ENCODE measurements at regions of chr12 and their contacts with region 1.

Region 1: DNA sequence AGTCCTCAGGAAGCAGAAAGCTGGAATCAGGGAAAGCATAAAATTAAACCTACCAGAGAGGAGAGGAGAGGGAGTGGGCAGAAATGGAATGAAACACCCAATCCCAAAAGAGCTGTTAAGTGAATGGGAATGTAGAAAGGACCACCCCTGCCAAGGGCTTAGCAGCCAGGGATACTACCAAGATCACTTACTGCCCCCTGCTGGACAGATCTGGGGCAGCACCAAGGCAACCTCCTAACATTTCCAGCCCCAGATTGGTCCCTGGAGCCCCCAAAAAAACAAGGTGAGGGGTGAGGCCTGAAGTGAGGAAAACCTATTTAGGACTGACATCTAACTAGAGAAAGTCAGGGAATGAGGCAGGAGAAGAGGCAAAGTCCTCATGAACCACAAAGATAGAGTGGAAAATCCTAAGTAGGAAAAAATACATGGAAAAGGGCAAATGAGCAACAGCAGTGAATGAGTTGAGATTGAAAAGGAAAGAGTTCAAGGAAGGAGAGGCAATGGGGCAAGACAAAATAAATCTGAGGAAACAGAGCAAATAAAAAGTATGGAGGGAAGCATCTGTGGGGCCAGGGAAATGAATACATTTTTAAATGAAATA is 11.2 kb upstream of the FKBP11 start:
- DNase-seq: peak; percentile 43
- ATAC-seq: peak; percentile 86
- H3K4me3 ChIP-seq: no peak overlapping the region
- H3K27ac ChIP-seq: no peak overlapping the region
- H3K4me1 ChIP-seq: peaks cover 7% of the 10 kb centered on the region
- H3K27me3 ChIP-seq: no peaks in the 10 kb centered on the region
- CTCF ChIP-seq: peak; percentile 89
- EP300 ChIP-seq: no peak
- POLR2A ChIP-seq: no peak
- RAD21 ChIP-seq: peak; percentile 67; the same call in 1 of the 2 replicates

Region 2: GRCh38 chr12:48890657-48891418 is 45.6 kb before region 1 on chr12:
- CTCF ChIA-PET with region 1: interaction called, 7 read pairs
- POLR2A ChIA-PET with region 1: no interaction called
- in situ Hi-C with region 1: no loop called
- intact Hi-C with region 1: loop called (anchors 2 kb)
- DNase-seq: peak; percentile 48
- ATAC-seq: peak; percentile 97
- H3K4me3 ChIP-seq: peak overlapping the region in 1 of 3 experiments; percentile 34; a peak in 1 of 6 replicates
- H3K27ac ChIP-seq: no peak overlapping the region
- H3K4me1 ChIP-seq: peaks cover 33% of the 10 kb centered on the region
- H3K27me3 ChIP-seq: peaks cover 1 to 10% of the 10 kb centered on the region in 2 experiments; a peak in 3 of 5 replicates
- CTCF ChIP-seq: peak; percentile 97
- EP300 ChIP-seq: no peak
- POLR2A ChIP-seq: no peak
- RAD21 ChIP-seq: peak; percentile 96

Region 3: GRCh38 chr12:48903982-48904411 is 32.5 kb before region 1 on chr12:
- CTCF ChIA-PET with region 1: no interaction called
- POLR2A ChIA-PET with region 1: no interaction called
- in situ Hi-C with region 1: no loop called
- intact Hi-C with region 1: no loop called
- DNase-seq: peak; percentile 76
- ATAC-seq: peak; percentile 66
- H3K4me3 ChIP-seq: peak overlapping the region; percentile 20 to 41 (median 34); a peak in 2 of 6 replicates
- H3K27ac ChIP-seq: no peak overlapping the region
- H3K4me1 ChIP-seq: peaks cover 87% of the 10 kb centered on the region
- H3K27me3 ChIP-seq: no peaks in the 10 kb centered on the region
- CTCF ChIP-seq: peak; percentile 69
- EP300 ChIP-seq: no peak
- POLR2A ChIP-seq: no peak
- RAD21 ChIP-seq: peak; percentile 20; the same call in 1 of the 2 replicates

Region 4: DNA sequence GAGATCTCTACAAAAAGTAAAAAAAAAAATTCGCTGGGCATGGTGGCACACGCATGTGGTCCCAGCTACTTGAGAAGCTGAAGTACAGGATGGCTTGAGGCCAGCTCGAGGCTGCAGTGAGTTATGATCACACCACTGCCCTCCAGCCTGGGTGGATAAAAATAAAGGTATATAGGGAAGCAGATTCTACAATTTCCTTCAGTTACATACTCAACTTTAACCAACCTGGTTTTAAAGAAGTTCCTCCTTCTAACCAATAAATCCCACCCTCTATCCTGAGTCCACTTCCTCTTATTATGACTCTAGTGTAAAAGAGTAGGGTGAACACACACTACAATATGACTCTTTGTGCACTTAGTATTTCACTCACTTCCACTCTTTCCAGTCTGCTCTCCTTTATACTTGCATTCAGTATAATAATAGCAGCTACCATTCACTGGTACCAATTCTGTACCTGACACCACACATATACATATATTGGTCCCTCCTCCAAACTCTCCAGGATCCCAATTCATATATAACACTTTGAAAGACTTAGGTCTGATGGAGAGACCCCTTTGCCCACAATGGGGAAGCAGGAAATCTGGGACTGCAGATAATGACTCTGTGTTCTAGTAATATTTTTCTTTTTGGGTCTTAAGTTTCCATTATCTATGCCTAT is 18.5 kb after region 1 on chr12:
- CTCF ChIA-PET with region 1: no interaction called
- POLR2A ChIA-PET with region 1: no interaction called
- in situ Hi-C with region 1: no loop called
- intact Hi-C with region 1: no loop called
- DNase-seq: no peak
- ATAC-seq: no peak
- H3K4me3 ChIP-seq: no peak overlapping the region
- H3K27ac ChIP-seq: no peak overlapping the region
- H3K4me1 ChIP-seq: peaks cover 26% of the 10 kb centered on the region
- H3K27me3 ChIP-seq: no peaks in the 10 kb centered on the region
- CTCF ChIP-seq: no peak
- EP300 ChIP-seq: no peak
- POLR2A ChIP-seq: no peak
- RAD21 ChIP-seq: no peak

Measured in HepG2 (cell line).